Naive thymus-derived CD4-positive, alpha-beta T cell (primary cell): ENCODE measurements at regions of chr3 and their contacts with region 1.

Region 1: GRCh38 chr3:101803173-101803782 is 24.3 kb downstream of the NXPE3 start:
- DNase-seq: peak in 7 of 9 donors; percentile 59 to 78 (median 69)
- ATAC-seq: peak; percentile 100
- H3K4me3 ChIP-seq: no peak overlapping the region
- H3K4me3 Mint-ChIP-seq: peak overlapping the region in 6 of 10 donors; percentile 14 to 58 (median 29)
- H3K27ac ChIP-seq: peak overlapping the region; percentile 29
- H3K27ac Mint-ChIP-seq: peak overlapping the region; percentile 53 to 95 (median 68)
- H3K4me1 ChIP-seq: peaks cover 0 to 6% of the 10 kb centered on the region in 2 donors
- H3K4me1 Mint-ChIP-seq: peaks cover 10 to 67% (median 55%) of the 10 kb centered on the region in 7 donors
- H3K27me3 ChIP-seq: no peaks in the 10 kb centered on the region
- H3K27me3 Mint-ChIP-seq: no peaks in the 10 kb centered on the region

Region 2: DNA sequence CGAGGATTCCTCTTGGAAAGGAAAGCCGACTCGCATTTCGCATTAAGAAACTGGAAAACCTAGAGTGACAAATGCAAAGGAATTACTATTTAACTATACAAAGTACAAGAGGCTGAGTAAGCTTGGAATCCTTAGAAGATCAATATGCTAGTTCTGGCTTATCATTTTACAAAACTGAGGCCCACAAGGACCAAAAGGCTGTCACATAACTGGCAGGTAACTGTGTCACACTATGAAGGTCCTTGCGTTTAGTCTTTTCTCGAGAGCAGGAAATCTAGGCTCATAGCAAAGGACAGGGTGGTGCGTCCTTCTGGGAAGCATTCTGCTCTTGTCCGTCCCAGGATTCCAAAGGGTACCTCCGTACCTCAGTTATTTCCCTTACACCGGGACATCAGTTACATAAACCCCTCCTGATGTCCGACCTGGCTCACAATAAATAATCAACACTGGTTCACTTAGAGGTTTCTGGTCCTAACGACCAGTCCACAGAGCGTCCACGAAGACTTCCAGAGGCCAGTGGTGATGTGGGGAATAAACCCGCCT is 117.3 kb before region 1 on chr3:
- CTCF ChIA-PET with region 1: no interaction called
- POLR2A ChIA-PET with region 1: interaction called, 3 read pairs
- intact Hi-C with region 1: loop called in 1 of 2 experiments (anchors 5 kb)
- DNase-seq: peak in 2 of 9 donors; percentile 21 to 24
- ATAC-seq: peak; percentile 1
- H3K4me3 ChIP-seq: peak overlapping the region; percentile 72
- H3K4me3 Mint-ChIP-seq: peak overlapping the region; percentile 90 to 100 (median 98)
- H3K27ac ChIP-seq: peak overlapping the region; percentile 92
- H3K27ac Mint-ChIP-seq: peak overlapping the region; percentile 94 to 100 (median 99)
- H3K4me1 ChIP-seq: peaks cover 24 to 25% of the 10 kb centered on the region in 2 donors
- H3K4me1 Mint-ChIP-seq: peaks cover 20 to 58% (median 41%) of the 10 kb centered on the region in 7 donors
- H3K27me3 ChIP-seq: no peaks in the 10 kb centered on the region
- H3K27me3 Mint-ChIP-seq: no peaks in the 10 kb centered on the region

Region 3: DNA sequence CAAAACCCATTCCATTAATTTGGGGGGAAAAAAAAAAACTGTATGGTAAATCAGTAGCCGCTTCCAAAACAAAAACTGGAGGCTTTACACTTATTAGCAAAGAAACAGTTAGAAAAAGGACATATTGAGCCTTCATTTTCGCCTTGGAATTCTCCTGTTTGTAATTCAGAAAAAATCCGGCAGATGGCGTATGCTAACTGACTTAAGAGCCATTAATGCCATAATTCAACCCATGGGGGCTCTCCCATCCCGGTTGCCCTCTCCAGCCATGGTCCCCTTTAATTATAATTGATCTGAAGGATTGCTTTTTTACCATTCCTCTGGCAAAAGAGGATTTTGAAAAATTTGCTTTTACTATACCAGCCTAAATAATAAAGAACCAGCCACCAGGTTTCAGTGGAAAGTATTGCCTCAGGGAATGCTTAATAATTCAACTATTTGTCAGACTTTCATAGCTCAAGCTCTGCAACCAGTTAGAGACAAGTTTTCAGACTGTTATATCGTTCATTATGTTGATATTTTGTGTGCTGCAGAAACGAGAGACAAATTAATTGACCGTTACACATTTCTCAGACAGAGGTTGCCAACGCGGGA is 107.4 kb before region 1 on chr3:
- CTCF ChIA-PET with region 1: interaction called, 3 read pairs
- POLR2A ChIA-PET with region 1: no interaction called
- intact Hi-C with region 1: loop called (anchors 1 kb)
- DNase-seq: peak in 7 of 9 donors; percentile 30 to 65 (median 57)
- ATAC-seq: no peak
- H3K4me3 ChIP-seq: no peak overlapping the region
- H3K4me3 Mint-ChIP-seq: no peak overlapping the region
- H3K27ac ChIP-seq: no peak overlapping the region
- H3K27ac Mint-ChIP-seq: peak overlapping the region in 2 of 9 donors; percentile 8 to 45
- H3K4me1 ChIP-seq: no peaks in the 10 kb centered on the region
- H3K4me1 Mint-ChIP-seq: peaks cover 0 to 4% (median 3%) of the 10 kb centered on the region in 7 donors
- H3K27me3 ChIP-seq: no peaks in the 10 kb centered on the region
- H3K27me3 Mint-ChIP-seq: no peaks in the 10 kb centered on the region

Region 4: GRCh38 chr3:101784855-101785613 is 18.2 kb before region 1 on chr3:
- CTCF ChIA-PET with region 1: interaction called, 9 read pairs
- POLR2A ChIA-PET with region 1: interaction called, 22 read pairs
- intact Hi-C with region 1: loop called in 1 of 2 experiments (anchors 1 kb)
- DNase-seq: peak in 7 of 9 donors; percentile 56 to 80 (median 74)
- ATAC-seq: peak; percentile 89
- H3K4me3 ChIP-seq: peak overlapping the region; percentile 50
- H3K4me3 Mint-ChIP-seq: peak overlapping the region; percentile 75 to 88 (median 83)
- H3K27ac ChIP-seq: peak overlapping the region; percentile 71
- H3K27ac Mint-ChIP-seq: peak overlapping the region; percentile 89 to 99 (median 96)
- H3K4me1 ChIP-seq: peaks cover 8 to 54% of the 10 kb centered on the region in 2 donors
- H3K4me1 Mint-ChIP-seq: peaks cover 56 to 86% (median 75%) of the 10 kb centered on the region in 7 donors
- H3K27me3 ChIP-seq: no peaks in the 10 kb centered on the region
- H3K27me3 Mint-ChIP-seq: no peaks in the 10 kb centered on the region

Region 5: GRCh38 chr3:102536456-102536855 is 733.2 kb after region 1 on chr3:
- CTCF ChIA-PET with region 1: interaction called, 9 read pairs
- POLR2A ChIA-PET with region 1: interaction called, 3 read pairs
- intact Hi-C with region 1: loop called (anchors 1 to 2 kb)
- DNase-seq: peak in 6 of 9 donors; percentile 3 to 34 (median 22)
- ATAC-seq: peak; percentile 60
- H3K4me3 ChIP-seq: no peak overlapping the region
- H3K4me3 Mint-ChIP-seq: no peak overlapping the region
- H3K27ac ChIP-seq: no peak overlapping the region
- H3K27ac Mint-ChIP-seq: no peak overlapping the region
- H3K4me1 ChIP-seq: no peaks in the 10 kb centered on the region
- H3K4me1 Mint-ChIP-seq: peaks cover 0 to 6% (median 5%) of the 10 kb centered on the region in 7 donors
- H3K27me3 ChIP-seq: no peaks in the 10 kb centered on the region
- H3K27me3 Mint-ChIP-seq: peaks cover 0 to 11% (median 5%) of the 10 kb centered on the region in 5 donors